ENCODE measurements at regions of chr12 and their contacts with region 1.

Region 1: DNA sequence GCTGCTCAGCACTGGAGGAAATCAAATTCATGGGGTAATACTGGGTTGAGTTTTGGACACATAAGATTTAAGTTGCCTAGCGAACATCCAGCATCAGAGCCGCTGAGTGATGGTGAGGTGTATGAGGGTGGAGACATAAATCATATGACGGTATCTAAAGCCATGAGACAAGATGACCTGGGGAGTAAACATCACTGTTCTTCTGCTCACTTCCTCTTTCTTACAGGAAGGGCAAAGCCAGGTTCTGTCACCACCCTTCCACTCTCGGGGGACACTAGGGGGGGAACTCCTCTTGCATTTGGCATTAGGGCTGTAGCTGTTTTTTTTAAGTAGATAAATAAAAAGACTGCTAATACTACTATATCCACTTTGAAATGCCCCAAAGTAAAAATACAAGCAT is 24.0 kb downstream of the PRDM4 start:
- DNase-seq: peak; percentile 93
- ATAC-seq: peak; percentile 98
- H3K4me3 ChIP-seq: peak overlapping the region in 1 of 5 experiments; percentile 33
- H3K4me3 Mint-ChIP-seq: peak overlapping the region; percentile 80
- H3K27ac ChIP-seq: peak overlapping the region; percentile 96 to 99
- H3K27ac Mint-ChIP-seq: peak overlapping the region; percentile 95
- H3K4me1 ChIP-seq: peaks cover 34 to 36% of the 10 kb centered on the region in 2 donors
- H3K4me1 Mint-ChIP-seq: peaks cover 75% of the 10 kb centered on the region
- H3K27me3 ChIP-seq: no peaks in the 10 kb centered on the region
- H3K27me3 Mint-ChIP-seq: no peaks in the 10 kb centered on the region
- CTCF ChIP-seq: peak; percentile 58

Region 2: DNA sequence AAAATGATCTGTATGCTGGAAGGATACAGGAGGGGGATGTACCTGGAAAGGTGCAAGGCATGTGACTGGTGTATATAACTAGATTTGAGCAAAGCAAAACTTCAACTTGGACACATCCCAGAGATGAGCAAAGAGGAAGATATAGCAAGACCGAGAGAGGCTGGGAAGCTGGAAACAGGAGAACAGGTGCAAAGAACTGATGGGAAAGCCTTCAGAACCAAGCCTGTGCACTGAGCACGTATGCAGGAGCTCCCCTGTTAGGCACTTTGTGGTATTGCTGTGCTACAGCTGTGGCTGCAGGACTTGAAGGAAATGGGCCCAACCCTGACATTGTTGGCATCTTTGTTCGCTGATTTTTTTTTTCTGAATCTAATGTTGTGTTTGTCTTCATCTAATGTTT is 172.0 kb before region 1 on chr12:
- CTCF ChIA-PET with region 1: no interaction called
- POLR2A ChIA-PET with region 1: no interaction called
- intact Hi-C with region 1: no loop called
- DNase-seq: peak; percentile 21
- ATAC-seq: no peak
- H3K4me3 ChIP-seq: no peak overlapping the region
- H3K4me3 Mint-ChIP-seq: no peak overlapping the region
- H3K27ac ChIP-seq: no peak overlapping the region
- H3K27ac Mint-ChIP-seq: no peak overlapping the region
- H3K4me1 ChIP-seq: peaks cover 5% of the 10 kb centered on the region in 2 donors
- H3K4me1 Mint-ChIP-seq: peaks cover 11% of the 10 kb centered on the region
- H3K27me3 ChIP-seq: no peaks in the 10 kb centered on the region
- H3K27me3 Mint-ChIP-seq: peaks cover 3% of the 10 kb centered on the region
- CTCF ChIP-seq: no peak

Region 3: GRCh38 chr12:107685360-107686248 is 51.3 kb before region 1 on chr12 and contains the start of gene PWP1:
- CTCF ChIA-PET with region 1: interaction called, 5 read pairs
- POLR2A ChIA-PET with region 1: interaction called, 4 read pairs
- intact Hi-C with region 1: loop called (anchors 1 kb)
- DNase-seq: peak; percentile 98
- ATAC-seq: peak; percentile 91
- H3K4me3 ChIP-seq: peak within 1 kb of the TSS; percentile 69 to 96 (median 86)
- H3K4me3 Mint-ChIP-seq: peak within 1 kb of the TSS; percentile 96
- H3K27ac ChIP-seq: peak within 1 kb of the TSS; percentile 81 to 85
- H3K27ac Mint-ChIP-seq: peak within 1 kb of the TSS; percentile 98
- H3K4me1 ChIP-seq: peaks cover 16 to 22% of the 10 kb centered on the region in 2 donors
- H3K4me1 Mint-ChIP-seq: peaks cover 25% of the 10 kb centered on the region
- H3K27me3 ChIP-seq: no peaks in the 10 kb centered on the region
- H3K27me3 Mint-ChIP-seq: no peaks in the 10 kb centered on the region
- CTCF ChIP-seq: no peak
- total RNA-seq, gene PWP1: 51.2 and 54.8 TPM in 2 replicates

Region 4: GRCh38 chr12:107702106-107702505 is 34.8 kb before region 1 on chr12:
- CTCF ChIA-PET with region 1: interaction called, 14 read pairs
- POLR2A ChIA-PET with region 1: interaction called, 4 read pairs
- intact Hi-C with region 1: no loop called
- DNase-seq: no peak
- ATAC-seq: peak; percentile 31
- H3K4me3 ChIP-seq: no peak overlapping the region
- H3K4me3 Mint-ChIP-seq: peak overlapping the region; percentile 57
- H3K27ac ChIP-seq: peak overlapping the region; percentile 67 to 74
- H3K27ac Mint-ChIP-seq: peak overlapping the region; percentile 83
- H3K4me1 ChIP-seq: peaks cover 11 to 19% of the 10 kb centered on the region in 2 donors
- H3K4me1 Mint-ChIP-seq: peaks cover 24% of the 10 kb centered on the region
- H3K27me3 ChIP-seq: no peaks in the 10 kb centered on the region
- H3K27me3 Mint-ChIP-seq: no peaks in the 10 kb centered on the region
- CTCF ChIP-seq: no peak

Region 5: GRCh38 chr12:107798580-107798979 is 61.7 kb after region 1 on chr12:
- CTCF ChIA-PET with region 1: no interaction called
- POLR2A ChIA-PET with region 1: no interaction called
- intact Hi-C with region 1: no loop called
- DNase-seq: no peak
- ATAC-seq: no peak
- H3K4me3 ChIP-seq: no peak overlapping the region
- H3K4me3 Mint-ChIP-seq: no peak overlapping the region
- H3K27ac ChIP-seq: no peak overlapping the region
- H3K27ac Mint-ChIP-seq: no peak overlapping the region
- H3K4me1 ChIP-seq: peaks cover 8 to 10% of the 10 kb centered on the region in 2 donors
- H3K4me1 Mint-ChIP-seq: peaks cover 11% of the 10 kb centered on the region
- H3K27me3 ChIP-seq: peaks cover 0 to 3% (median 0%) of the 10 kb centered on the region in 4 experiments
- H3K27me3 Mint-ChIP-seq: peaks cover 12% of the 10 kb centered on the region
- CTCF ChIP-seq: no peak